Heart left ventricle (tissue), 16 donors: ENCODE measurements at regions of chr2 and their contacts with region 1.

Region 1: GRCh38 chr2:100742277-100743254 is 77.4 kb upstream of the NPAS2 start:
- DNase-seq: peak in 4 of 5 donors; percentile 32 to 55 (median 40)
- ATAC-seq: peak; percentile 80 to 89 (median 86)
- H3K4me3 ChIP-seq: no peak overlapping the region
- H3K27ac ChIP-seq: peak overlapping the region in 7 of 12 donors; percentile 6 to 69 (median 59)
- H3K4me1 ChIP-seq: peaks cover 0 to 22% (median 0%) of the 10 kb centered on the region in 12 donors
- H3K27me3 ChIP-seq: no peaks in the 10 kb centered on the region
- CTCF ChIP-seq: no peak
- POLR2A ChIP-seq: no peak

Region 2: GRCh38 chr2:100976645-100977391 is 234.3 kb after region 1 on chr2:
- intact Hi-C with region 1: loop called in 1 of 10 experiments (anchors 5 kb)
- DNase-seq: no peak
- ATAC-seq: peak in 1 of 4 donors; percentile 6
- H3K4me3 ChIP-seq: no peak overlapping the region
- H3K27ac ChIP-seq: peak overlapping the region in 1 of 12 donors; percentile 65
- H3K4me1 ChIP-seq: no peaks in the 10 kb centered on the region
- H3K27me3 ChIP-seq: no peaks in the 10 kb centered on the region
- CTCF ChIP-seq: no peak
- POLR2A ChIP-seq: no peak